ENCODE measurements at regions of chr1 and their contacts with region 1.

Region 1: GRCh38 chr1:66242646-66243547 is 291.1 kb upstream of the SGIP1 start:
- DNase-seq: peak; percentile 82
- ATAC-seq: peak; percentile 99
- H3K4me3 ChIP-seq: no peak overlapping the region
- H3K27ac ChIP-seq: no peak overlapping the region
- H3K4me1 ChIP-seq: peaks cover 0 to 12% of the 10 kb centered on the region in 2 experiments; a peak in 1 of 4 replicates
- H3K27me3 ChIP-seq: no peaks in the 10 kb centered on the region
- CTCF ChIP-seq: peak; percentile 98 to 100 (median 99)
- POLR2A ChIP-seq: no peak
- RAD21 ChIP-seq: peak; percentile 100

Region 2: GRCh38 chr1:65067491-65068201 is 1175.3 kb before region 1 on chr1:
- CTCF ChIA-PET with region 1: no interaction called
- POLR2A ChIA-PET with region 1: no interaction called
- RAD21 ChIA-PET with region 1: no interaction called
- intact Hi-C with region 1: loop called (anchors 10 kb)
- DNase-seq: peak; percentile 46
- ATAC-seq: peak; percentile 34
- H3K4me3 ChIP-seq: peak overlapping the region; percentile 68 to 76
- H3K27ac ChIP-seq: peak overlapping the region; percentile 94
- H3K4me1 ChIP-seq: peaks cover 10 to 23% of the 10 kb centered on the region in 2 experiments; a peak in 3 of 4 replicates
- H3K27me3 ChIP-seq: no peaks in the 10 kb centered on the region
- CTCF ChIP-seq: no peak
- POLR2A ChIP-seq: no peak
- RAD21 ChIP-seq: no peak

Region 3: DNA sequence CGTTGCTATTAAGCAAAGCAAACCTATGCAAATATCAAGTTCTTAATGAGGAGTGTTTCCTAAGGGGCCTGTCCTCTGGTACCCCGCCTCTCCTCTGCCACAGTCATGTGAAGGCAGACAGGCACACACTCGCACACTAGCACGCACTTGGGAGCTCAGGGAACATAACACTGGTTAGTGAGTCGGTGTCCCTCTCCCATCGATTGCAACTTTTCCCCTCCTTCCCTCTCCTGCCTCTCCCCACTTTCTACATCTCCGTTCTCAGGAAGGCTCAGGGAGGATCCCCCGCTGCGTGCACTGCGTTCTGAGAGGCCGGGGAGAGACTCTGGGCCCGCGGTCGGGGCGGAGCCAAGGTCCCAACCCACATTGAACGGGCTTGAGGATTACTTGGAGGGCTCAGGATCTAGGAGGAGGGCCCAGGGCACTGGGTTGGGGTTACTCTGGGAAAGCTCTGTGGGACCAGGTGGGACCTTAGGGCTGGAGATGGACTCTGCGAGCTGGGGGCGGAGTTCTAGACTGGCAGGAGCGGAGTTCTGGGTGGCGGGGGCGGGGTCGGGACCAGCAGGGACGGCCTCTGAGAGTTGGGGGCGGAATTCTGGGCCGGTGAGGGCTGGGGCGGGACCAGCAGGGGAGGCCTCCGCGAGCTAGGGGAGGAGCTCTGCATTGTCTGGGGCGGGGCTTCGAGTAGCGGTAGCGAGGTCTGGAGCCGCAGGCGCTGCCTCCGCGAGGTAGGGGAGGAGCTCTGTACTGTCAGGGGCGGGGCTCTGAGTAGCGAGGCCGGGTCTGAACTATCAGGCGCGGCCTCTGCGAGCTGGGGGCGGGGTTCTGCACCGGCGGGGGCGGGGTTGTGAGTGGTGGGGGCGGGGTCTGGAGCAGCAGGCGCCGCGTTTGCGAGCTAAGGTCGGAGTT is 823.0 kb before region 1 on chr1:
- CTCF ChIA-PET with region 1: no interaction called
- POLR2A ChIA-PET with region 1: no interaction called
- RAD21 ChIA-PET with region 1: no interaction called
- intact Hi-C with region 1: loop called (anchors 10 kb)
- DNase-seq: peak; percentile 96
- ATAC-seq: peak; percentile 92
- H3K4me3 ChIP-seq: peak overlapping the region; percentile 79 to 84
- H3K27ac ChIP-seq: peak overlapping the region; percentile 71
- H3K4me1 ChIP-seq: peaks cover 24 to 49% of the 10 kb centered on the region in 2 experiments
- H3K27me3 ChIP-seq: no peaks in the 10 kb centered on the region
- CTCF ChIP-seq: no peak
- POLR2A ChIP-seq: peak; percentile 47
- RAD21 ChIP-seq: no peak

Region 4: DNA sequence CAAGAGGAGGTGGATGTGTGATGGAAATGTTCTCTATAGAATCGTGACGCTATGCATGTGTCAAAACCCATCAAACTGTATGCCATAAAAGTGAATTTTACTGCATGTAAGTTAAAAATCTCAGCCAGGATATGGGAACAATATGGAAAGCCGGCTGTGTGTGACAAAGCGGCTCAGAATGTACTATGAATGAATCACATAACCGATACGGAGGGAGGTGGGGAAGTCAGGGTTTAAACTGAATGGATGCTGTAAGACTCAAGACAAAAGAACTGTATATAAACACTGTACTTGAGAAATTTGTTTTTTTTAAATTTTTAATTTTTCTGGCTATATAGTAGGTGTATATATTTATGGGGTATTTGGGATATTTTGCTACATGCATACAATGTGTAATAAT is 561.8 kb before region 1 on chr1:
- CTCF ChIA-PET with region 1: no interaction called
- POLR2A ChIA-PET with region 1: no interaction called
- RAD21 ChIA-PET with region 1: no interaction called
- intact Hi-C with region 1: no loop called
- DNase-seq: no peak
- ATAC-seq: no peak
- H3K4me3 ChIP-seq: no peak overlapping the region
- H3K27ac ChIP-seq: no peak overlapping the region
- H3K4me1 ChIP-seq: no peaks in the 10 kb centered on the region
- H3K27me3 ChIP-seq: no peaks in the 10 kb centered on the region
- CTCF ChIP-seq: no peak
- POLR2A ChIP-seq: no peak
- RAD21 ChIP-seq: no peak

Region 5: GRCh38 chr1:65717815-65718454 is 525.0 kb before region 1 on chr1:
- CTCF ChIA-PET with region 1: interaction called, 10 read pairs
- POLR2A ChIA-PET with region 1: no interaction called
- RAD21 ChIA-PET with region 1: no interaction called
- intact Hi-C with region 1: loop called (anchors 1 kb)
- DNase-seq: peak; percentile 24
- ATAC-seq: peak; percentile 76
- H3K4me3 ChIP-seq: no peak overlapping the region
- H3K27ac ChIP-seq: no peak overlapping the region
- H3K4me1 ChIP-seq: no peaks in the 10 kb centered on the region
- H3K27me3 ChIP-seq: no peaks in the 10 kb centered on the region
- CTCF ChIP-seq: peak; percentile 8 to 46 (median 39); a peak in 3 of 6 replicates
- POLR2A ChIP-seq: no peak
- RAD21 ChIP-seq: peak; percentile 73

Region 6: DNA sequence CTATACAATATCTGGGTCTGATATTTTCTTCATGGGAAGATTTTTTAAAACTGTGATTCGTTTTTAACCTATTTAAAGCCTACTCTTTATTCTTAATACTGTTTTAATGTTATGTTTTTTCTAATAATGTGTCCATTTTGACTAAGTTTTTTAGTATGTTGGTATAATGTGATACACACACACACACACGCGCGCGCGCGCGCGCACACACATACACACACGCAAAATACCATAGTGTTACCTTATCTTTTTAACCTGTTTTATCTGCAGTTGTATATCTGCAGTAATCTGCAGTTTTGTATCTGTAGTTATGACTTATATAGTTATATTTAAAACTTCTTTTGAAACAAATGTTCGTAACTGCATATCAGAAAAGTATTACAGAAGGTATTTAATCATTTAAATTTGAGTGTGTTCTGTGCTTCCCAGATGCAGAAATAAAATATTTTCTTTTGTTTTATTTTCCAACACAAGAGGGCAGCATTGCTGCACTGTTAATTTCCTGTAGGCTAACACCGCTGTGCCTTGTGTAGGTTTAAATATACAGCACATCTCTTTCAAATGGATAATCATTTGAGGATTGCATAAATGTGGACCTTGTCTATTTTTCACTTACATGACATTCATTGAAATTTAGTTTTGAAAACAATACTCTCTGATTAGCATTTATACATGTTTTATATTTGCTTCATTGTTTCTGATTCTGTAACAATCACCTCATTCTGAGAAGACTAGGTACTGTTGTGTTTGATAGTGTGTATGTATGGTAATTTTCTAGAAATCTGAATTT is 284.1 kb before region 1 on chr1:
- CTCF ChIA-PET with region 1: interaction called, 42 read pairs
- POLR2A ChIA-PET with region 1: no interaction called
- RAD21 ChIA-PET with region 1: interaction called in 1 of 2 experiments, 6 read pairs
- intact Hi-C with region 1: loop called (anchors 1 kb)
- DNase-seq: peak; percentile 44
- ATAC-seq: peak; percentile 91
- H3K4me3 ChIP-seq: no peak overlapping the region
- H3K27ac ChIP-seq: no peak overlapping the region
- H3K4me1 ChIP-seq: peaks cover 4 to 10% of the 10 kb centered on the region in 2 experiments; a peak in 2 of 4 replicates
- H3K27me3 ChIP-seq: no peaks in the 10 kb centered on the region
- CTCF ChIP-seq: peak; percentile 41 to 97 (median 71); a peak in 5 of 6 replicates
- POLR2A ChIP-seq: no peak
- RAD21 ChIP-seq: peak; percentile 95

Region 7: DNA sequence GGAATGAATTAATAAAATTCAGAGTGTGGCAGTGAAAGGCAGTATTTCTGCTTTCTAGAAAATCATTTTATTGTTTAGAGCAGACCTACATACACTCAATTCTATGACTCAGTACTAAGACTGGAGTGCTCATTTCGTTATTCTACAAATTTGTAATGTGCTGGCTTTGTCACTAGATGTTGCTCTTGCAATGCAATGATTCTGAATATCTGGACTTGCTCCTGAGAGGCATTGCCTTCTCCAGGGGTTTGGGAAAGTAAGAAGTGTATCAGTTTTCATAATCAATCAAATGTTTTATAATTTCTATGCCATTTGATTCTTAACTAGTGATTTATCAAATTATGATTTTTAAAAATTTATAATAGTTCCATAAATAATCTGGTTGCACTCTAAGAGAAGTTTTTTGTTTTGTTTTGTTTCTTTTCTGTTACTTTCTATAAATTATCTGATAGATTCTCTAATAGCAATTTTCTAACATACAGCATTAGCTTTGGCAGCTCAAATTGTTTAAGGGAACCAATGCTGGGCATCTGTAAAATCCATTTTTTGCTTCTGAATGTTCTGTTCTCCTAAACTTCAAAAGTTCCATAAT is 10.5 kb after region 1 on chr1:
- CTCF ChIA-PET with region 1: interaction called, 11 read pairs
- POLR2A ChIA-PET with region 1: no interaction called
- RAD21 ChIA-PET with region 1: no interaction called
- intact Hi-C with region 1: no loop called
- DNase-seq: peak; percentile 65
- ATAC-seq: peak; percentile 88
- H3K4me3 ChIP-seq: no peak overlapping the region
- H3K27ac ChIP-seq: peak overlapping the region; percentile 12; the same call in 1 of the 2 replicates
- H3K4me1 ChIP-seq: peaks cover 17 to 62% of the 10 kb centered on the region in 2 experiments
- H3K27me3 ChIP-seq: no peaks in the 10 kb centered on the region
- CTCF ChIP-seq: peak; percentile 67 to 93 (median 87)
- POLR2A ChIP-seq: no peak
- RAD21 ChIP-seq: peak; percentile 99

Region 8: DNA sequence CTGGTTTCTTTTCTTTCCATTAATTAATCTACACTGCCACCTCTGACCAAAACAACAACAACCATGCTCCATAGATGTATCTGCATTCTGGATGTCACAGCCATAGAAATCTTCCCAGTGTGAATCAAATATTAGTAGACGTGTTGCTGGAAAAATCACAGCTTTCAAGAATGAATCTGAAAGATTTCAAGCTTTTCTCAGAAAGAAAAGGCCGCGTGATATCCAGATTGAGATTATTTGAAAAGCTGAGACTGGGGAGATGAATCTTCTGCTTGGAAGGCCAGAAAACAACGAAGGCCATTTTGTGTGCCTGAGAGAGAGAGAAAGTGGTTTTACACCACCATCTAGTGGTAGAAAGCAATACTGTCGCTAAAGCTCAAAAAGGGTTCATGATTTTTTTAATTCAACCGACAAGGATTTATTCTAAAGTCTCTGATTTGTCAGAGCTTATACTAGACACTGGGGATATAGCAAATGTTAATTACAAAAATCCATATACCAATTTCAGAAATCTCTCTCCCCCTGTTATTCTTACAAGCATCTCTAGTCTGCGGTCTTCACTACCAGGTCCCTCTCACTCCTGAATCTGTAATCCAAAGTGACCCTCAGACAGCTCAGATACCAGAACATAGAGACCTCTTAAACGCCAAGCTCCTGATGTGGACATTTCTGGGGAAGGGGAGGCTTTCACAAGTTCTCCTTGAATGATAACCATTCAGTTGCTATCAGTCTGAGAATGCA is 203.5 kb after region 1 on chr1:
- CTCF ChIA-PET with region 1: interaction called, 37 read pairs
- POLR2A ChIA-PET with region 1: no interaction called
- RAD21 ChIA-PET with region 1: interaction called, 3 to 11 read pairs
- intact Hi-C with region 1: no loop called
- DNase-seq: peak; percentile 74
- ATAC-seq: peak; percentile 76
- H3K4me3 ChIP-seq: no peak overlapping the region
- H3K27ac ChIP-seq: no peak overlapping the region
- H3K4me1 ChIP-seq: peaks cover 3 to 18% of the 10 kb centered on the region in 2 experiments; a peak in 2 of 4 replicates
- H3K27me3 ChIP-seq: no peaks in the 10 kb centered on the region
- CTCF ChIP-seq: peak; percentile 61 to 94 (median 80)
- POLR2A ChIP-seq: no peak
- RAD21 ChIP-seq: peak; percentile 84

Region 9: GRCh38 chr1:66585002-66585401 is 342.1 kb after region 1 on chr1:
- CTCF ChIA-PET with region 1: no interaction called
- POLR2A ChIA-PET with region 1: no interaction called
- RAD21 ChIA-PET with region 1: no interaction called
- intact Hi-C with region 1: no loop called
- DNase-seq: no peak
- ATAC-seq: no peak
- H3K4me3 ChIP-seq: no peak overlapping the region
- H3K27ac ChIP-seq: no peak overlapping the region
- H3K4me1 ChIP-seq: no peaks in the 10 kb centered on the region
- H3K27me3 ChIP-seq: no peaks in the 10 kb centered on the region
- CTCF ChIP-seq: no peak
- POLR2A ChIP-seq: no peak
- RAD21 ChIP-seq: no peak